Heart left ventricle (tissue), 16 donors: ENCODE measurements at regions of chr1 and their contacts with region 1.

Region 1: DNA sequence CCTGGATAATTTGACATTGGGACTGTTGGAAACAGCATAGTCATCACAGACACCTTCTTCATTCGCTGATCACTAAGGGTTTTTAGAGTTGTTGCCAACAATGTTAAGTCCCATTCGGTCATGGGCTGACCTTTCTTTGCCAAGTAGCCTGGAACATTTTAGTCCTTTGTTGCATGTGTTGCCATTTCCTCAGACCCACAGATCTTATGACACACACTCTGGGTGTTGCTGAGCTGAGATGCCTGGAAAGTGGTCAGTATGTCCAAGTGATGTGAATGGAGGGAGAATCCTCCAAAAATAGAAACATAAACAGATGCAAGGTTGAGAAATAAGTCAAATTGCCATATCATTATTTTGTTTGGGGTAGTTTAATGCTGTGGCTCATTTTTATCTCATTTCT is 61.5 kb upstream of the GJA5 start:
- DNase-seq: peak in 4 of 5 donors; percentile 33 to 56 (median 49)
- ATAC-seq: peak; percentile 95 to 97 (median 96)
- H3K4me3 ChIP-seq: no peak overlapping the region
- H3K27ac ChIP-seq: peak overlapping the region in 11 of 12 donors; percentile 36 to 90 (median 65)
- H3K4me1 ChIP-seq: peaks cover 0 to 22% (median 14%) of the 10 kb centered on the region in 12 donors
- H3K27me3 ChIP-seq: no peaks in the 10 kb centered on the region
- CTCF ChIP-seq: no peak
- POLR2A ChIP-seq: no peak

Region 2: GRCh38 chr1:147735423-147735822 is 86.5 kb before region 1 on chr1:
- intact Hi-C with region 1: loop called in 4 of 10 experiments (anchors 2 to 10 kb)
- DNase-seq: peak in 2 of 5 donors; percentile 32 to 57
- ATAC-seq: peak; percentile 37 to 80 (median 76)
- H3K4me3 ChIP-seq: no peak overlapping the region
- H3K27ac ChIP-seq: peak overlapping the region in 5 of 12 donors; percentile 3 to 60 (median 31)
- H3K4me1 ChIP-seq: peaks cover 0 to 45% (median 7%) of the 10 kb centered on the region in 12 donors
- H3K27me3 ChIP-seq: no peaks in the 10 kb centered on the region
- CTCF ChIP-seq: no peak
- POLR2A ChIP-seq: no peak

Region 3: DNA sequence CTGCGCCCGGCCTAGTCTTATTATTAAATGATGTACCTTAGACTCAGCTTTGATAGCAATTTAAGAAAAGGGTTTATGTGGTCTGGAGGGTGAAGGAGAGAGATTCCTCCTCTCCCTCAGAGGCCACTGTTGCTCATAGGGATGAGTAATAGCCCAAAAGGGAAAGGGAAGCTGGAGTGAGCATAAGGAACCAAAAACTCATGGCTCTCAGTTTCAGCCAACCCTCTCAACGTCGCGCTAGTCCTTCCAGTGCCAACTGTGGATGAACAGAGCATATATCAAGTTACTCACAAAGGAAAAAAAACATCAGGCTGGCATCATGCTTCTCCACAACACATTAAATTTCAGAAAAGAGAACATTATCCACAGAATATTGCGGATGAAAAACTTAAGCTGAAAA is 98.0 kb after region 1 on chr1:
- intact Hi-C with region 1: no loop called
- DNase-seq: no peak
- ATAC-seq: no peak
- H3K4me3 ChIP-seq: no peak overlapping the region
- H3K27ac ChIP-seq: no peak overlapping the region
- H3K4me1 ChIP-seq: no peaks in the 10 kb centered on the region
- H3K27me3 ChIP-seq: peaks cover 0 to 6% (median 0%) of the 10 kb centered on the region in 9 donors
- CTCF ChIP-seq: no peak
- POLR2A ChIP-seq: no peak